A673 (cell line): ENCODE measurements at regions of chr20 and their contacts with region 1.

Region 1: DNA sequence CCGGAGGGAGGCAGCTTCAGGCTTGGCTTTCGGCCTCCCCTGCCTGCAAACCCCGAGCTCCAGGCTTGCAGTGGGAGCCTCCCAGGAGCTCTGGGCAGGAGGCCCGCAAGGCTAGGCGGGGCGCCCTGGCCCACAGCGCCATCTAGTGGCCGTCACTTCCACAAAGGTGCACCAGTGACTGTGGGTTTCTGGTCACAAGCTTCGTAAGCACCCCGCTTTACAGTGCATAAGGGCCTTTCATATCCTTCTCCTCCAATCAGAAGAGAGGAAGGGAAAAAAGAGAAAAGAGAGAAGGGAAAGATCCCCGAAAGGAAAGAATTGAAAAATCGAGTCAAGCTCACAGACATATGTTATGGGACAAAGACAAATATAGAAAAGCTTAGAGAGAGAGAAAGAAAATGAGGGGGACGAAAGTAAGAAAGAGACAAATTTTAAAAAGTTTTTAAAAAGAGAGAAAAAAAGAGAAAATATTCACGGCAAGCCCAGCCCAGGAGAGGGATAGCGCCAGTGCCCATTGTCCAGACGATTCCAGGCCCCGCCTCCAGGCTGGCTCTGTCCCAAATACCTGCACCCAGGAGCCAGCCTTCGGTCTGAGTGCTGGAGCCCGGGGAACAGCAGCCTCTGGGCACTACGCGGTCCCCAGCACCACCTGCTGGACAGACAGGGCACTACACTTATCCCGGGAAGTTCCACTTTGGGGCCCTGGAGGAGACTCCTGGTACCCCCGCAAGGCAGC is 207.1 kb downstream of the PREX1 start:
- DNase-seq: peak; percentile 86
- H3K4me3 ChIP-seq: no peak overlapping the region
- H3K27ac ChIP-seq: no peak overlapping the region
- H3K4me1 ChIP-seq: peaks cover 13% of the 10 kb centered on the region
- H3K27me3 ChIP-seq: no peaks in the 10 kb centered on the region
- CTCF ChIP-seq: peak; percentile 82

Region 2: DNA sequence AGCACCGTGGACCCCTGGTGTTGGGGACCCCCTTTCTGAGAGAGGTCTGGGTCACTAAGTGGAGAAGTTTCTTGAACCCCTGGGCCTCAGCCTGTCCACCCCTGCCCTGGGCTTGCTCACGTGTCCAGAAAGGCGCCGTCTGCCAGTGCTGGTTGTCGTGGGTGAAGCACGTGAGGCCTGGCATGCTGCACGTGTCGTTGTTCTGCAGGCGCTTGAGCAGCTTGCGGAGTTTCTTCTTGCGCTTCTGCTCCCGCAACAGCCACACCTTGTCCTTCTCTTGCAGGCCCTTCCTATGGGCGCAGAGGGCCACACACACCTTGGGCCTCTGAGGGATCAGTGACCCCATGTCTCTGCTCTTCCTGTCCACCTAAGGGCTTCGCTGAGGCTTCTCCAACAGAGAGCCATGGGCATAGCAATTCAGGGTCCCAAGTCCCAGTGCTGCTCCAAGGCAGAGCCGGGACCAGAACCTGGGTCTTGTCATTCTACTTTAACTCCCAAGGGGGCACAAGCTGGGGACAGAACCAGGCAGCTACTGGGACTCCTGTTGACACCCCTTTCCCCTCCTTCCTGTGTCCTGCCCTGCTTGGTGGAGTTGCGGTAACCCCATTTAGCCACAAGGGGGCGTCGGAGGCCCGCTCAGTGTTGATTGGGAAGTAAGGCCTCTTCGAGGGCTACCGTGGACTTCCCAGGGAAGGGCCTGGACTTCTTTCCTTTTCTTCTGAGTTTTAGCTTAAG is 957.2 kb before region 1 on chr20:
- CTCF ChIA-PET with region 1: interaction called, 13 read pairs
- POLR2A ChIA-PET with region 1: no interaction called
- intact Hi-C with region 1: loop called (anchors 5 kb)
- DNase-seq: peak; percentile 83
- H3K4me3 ChIP-seq: no peak overlapping the region
- H3K27ac ChIP-seq: no peak overlapping the region
- H3K4me1 ChIP-seq: no peaks in the 10 kb centered on the region
- H3K27me3 ChIP-seq: no peaks in the 10 kb centered on the region
- CTCF ChIP-seq: peak; percentile 96

Region 3: GRCh38 chr20:47677635-47678453 is 942.8 kb before region 1 on chr20:
- CTCF ChIA-PET with region 1: interaction called, 11 read pairs
- POLR2A ChIA-PET with region 1: no interaction called
- intact Hi-C with region 1: loop called (anchors 5 kb)
- DNase-seq: peak; percentile 35
- H3K4me3 ChIP-seq: no peak overlapping the region
- H3K27ac ChIP-seq: no peak overlapping the region
- H3K4me1 ChIP-seq: no peaks in the 10 kb centered on the region
- H3K27me3 ChIP-seq: no peaks in the 10 kb centered on the region
- CTCF ChIP-seq: peak; percentile 91

Region 4: DNA sequence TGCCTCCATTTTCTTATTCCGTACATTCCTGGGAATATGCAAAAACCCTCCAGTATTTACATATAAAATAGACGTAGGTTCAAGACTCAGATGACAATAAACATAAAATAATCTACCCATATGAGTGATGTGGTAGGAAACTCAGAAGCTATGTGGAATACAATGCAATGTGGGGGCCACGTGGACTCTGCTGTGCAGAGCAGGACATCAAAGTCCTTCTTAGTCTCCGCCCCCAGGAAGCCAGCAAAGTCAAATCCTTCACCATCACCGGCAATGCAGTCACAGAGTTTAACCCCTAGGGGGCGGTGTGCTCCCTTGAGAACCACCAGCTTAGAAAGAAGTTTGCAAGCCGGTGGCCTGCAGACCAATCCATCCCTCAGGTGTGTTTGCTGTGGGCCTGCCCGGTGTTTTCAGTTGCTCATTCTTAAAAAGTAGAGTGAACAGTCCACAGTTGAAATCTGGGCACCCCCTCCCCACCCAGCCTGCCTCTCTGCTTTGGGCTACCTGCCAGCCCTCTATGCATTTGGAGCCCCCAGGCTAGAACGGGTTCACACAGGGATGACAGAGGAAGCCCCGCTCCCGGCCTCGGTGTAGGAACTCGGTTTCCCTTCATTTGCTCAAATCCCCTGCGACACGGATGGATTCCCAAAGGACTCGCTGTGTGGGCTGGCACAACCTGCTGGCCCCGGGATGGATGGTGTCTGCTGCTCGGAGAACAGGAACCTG is 895.3 kb before region 1 on chr20:
- CTCF ChIA-PET with region 1: interaction called, 9 read pairs
- POLR2A ChIA-PET with region 1: no interaction called
- intact Hi-C with region 1: loop called (anchors 2 kb)
- DNase-seq: peak; percentile 91
- H3K4me3 ChIP-seq: no peak overlapping the region
- H3K27ac ChIP-seq: no peak overlapping the region
- H3K4me1 ChIP-seq: peaks cover 26% of the 10 kb centered on the region
- H3K27me3 ChIP-seq: no peaks in the 10 kb centered on the region
- CTCF ChIP-seq: peak; percentile 93

Region 5: GRCh38 chr20:47785854-47786764 is 834.6 kb before region 1 on chr20:
- CTCF ChIA-PET with region 1: interaction called, 11 read pairs
- POLR2A ChIA-PET with region 1: no interaction called
- intact Hi-C with region 1: loop called (anchors 2 kb)
- DNase-seq: peak; percentile 66
- H3K4me3 ChIP-seq: peak overlapping the region; percentile 35
- H3K27ac ChIP-seq: no peak overlapping the region
- H3K4me1 ChIP-seq: peaks cover 15% of the 10 kb centered on the region
- H3K27me3 ChIP-seq: peaks cover 57% of the 10 kb centered on the region
- CTCF ChIP-seq: peak; percentile 67

Region 6: GRCh38 chr20:47854163-47854562 is 766.5 kb before region 1 on chr20:
- CTCF ChIA-PET with region 1: interaction called, 11 read pairs
- POLR2A ChIA-PET with region 1: no interaction called
- intact Hi-C with region 1: loop called (anchors 2 kb)
- DNase-seq: no peak
- H3K4me3 ChIP-seq: no peak overlapping the region
- H3K27ac ChIP-seq: no peak overlapping the region
- H3K4me1 ChIP-seq: no peaks in the 10 kb centered on the region
- H3K27me3 ChIP-seq: peaks cover 4% of the 10 kb centered on the region
- CTCF ChIP-seq: no peak

Region 7: DNA sequence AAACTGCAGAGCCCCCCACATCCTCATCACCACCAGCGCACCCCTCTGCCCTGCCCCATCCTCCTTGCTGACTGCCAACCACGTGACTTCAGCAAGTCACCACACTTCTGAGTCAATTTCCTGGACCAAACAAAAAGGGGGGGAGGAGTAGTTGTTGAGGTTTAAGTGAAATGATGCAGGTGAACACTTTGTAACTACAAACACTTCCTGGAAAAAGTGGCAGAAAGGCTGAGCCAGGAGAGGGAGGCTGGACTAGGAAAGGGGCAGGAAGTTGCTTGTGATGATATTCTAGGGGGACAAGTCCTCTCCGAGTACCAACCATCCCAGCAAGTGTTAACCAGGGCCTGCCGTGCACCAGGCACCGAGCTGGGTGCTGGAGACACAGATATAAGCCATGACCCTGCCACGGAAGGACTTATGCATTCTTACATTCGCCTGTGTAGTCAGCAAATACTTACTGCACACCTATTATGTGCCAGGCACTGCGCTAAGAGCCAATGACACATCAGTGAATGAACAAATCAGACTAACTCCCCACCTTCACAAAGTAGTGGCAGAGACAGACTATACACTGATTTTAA is 139.8 kb after region 1 on chr20:
- CTCF ChIA-PET with region 1: no interaction called
- POLR2A ChIA-PET with region 1: no interaction called
- intact Hi-C with region 1: no loop called
- DNase-seq: no peak
- H3K4me3 ChIP-seq: no peak overlapping the region
- H3K27ac ChIP-seq: no peak overlapping the region
- H3K4me1 ChIP-seq: peaks cover 6% of the 10 kb centered on the region
- H3K27me3 ChIP-seq: no peaks in the 10 kb centered on the region
- CTCF ChIP-seq: no peak